Mammary epithelial cell (primary cell): ENCODE measurements at regions of chr20 and their contacts with region 1.

Region 1: DNA sequence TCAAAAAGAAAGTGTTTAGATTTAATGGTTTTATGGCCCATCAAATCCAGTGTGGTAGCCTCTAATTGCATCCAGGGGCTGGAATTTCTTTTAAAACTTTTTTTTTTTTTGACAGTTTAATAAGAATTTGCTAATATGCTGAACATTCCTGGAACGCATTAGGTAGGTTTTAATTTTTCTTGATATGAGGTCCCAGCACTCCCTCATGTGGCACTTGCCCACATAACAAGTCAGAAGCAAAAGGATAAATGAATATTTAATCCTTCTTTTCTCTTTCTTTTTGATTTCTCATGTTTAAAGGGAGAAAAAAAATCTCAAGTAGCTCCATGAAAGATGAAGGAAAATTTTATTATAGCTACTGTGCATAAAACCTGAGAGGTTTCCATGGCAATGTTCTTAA is 13.5 kb downstream of the HAO1 start:
- DNase-seq: no peak
- H3K4me3 ChIP-seq: no peak overlapping the region
- H3K27ac ChIP-seq: no peak overlapping the region
- H3K4me1 ChIP-seq: peaks cover 23% of the 10 kb centered on the region
- H3K27me3 ChIP-seq: no peaks in the 10 kb centered on the region
- CTCF ChIP-seq: peak; percentile 67 to 75

Region 2: GRCh38 chr20:6828794-6829423 is 1097.9 kb before region 1 on chr20:
- CTCF ChIA-PET with region 1: no interaction called
- dilution Hi-C with region 1: no loop called
- in situ Hi-C with region 1: no loop called
- intact Hi-C with region 1: loop called (anchors 2 kb)
- DNase-seq: peak; percentile 68
- H3K4me3 ChIP-seq: no peak overlapping the region
- H3K27ac ChIP-seq: peak overlapping the region; percentile 39
- H3K4me1 ChIP-seq: peaks cover 11% of the 10 kb centered on the region
- H3K27me3 ChIP-seq: no peaks in the 10 kb centered on the region
- CTCF ChIP-seq: peak; percentile 73 to 76

Region 3: DNA sequence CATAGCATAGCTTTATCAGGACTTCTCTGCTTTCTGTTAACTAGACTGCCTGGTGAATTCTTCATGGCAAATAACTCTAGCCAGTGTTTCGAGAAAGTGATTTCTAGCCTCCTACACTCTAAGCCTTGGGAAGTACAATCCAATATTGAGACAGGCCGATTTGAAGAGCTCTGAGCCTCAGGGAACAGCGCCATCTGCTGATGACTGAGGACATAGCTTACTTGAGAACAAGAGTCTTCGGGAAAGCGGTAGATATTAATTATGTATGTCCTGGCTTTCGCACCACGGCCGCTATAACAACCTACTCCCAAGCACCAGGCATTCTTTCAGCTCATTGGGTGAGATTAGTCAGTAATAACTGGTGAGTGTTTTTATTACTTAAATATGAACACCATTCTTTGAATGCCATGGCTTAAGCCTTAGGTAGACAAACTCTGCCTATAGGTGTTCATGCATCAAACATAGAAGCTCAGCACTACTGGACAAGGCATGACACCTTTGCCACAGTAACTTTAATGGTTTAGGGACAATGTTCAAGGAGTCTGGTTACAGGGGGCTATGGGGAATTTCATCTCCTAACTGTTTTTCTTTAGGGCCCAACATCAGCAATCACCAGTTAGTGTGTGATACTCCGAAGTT is 640.7 kb before region 1 on chr20:
- CTCF ChIA-PET with region 1: no interaction called
- dilution Hi-C with region 1: no loop called
- in situ Hi-C with region 1: no loop called
- intact Hi-C with region 1: loop called (anchors 5 kb)
- DNase-seq: peak; percentile 71
- H3K4me3 ChIP-seq: no peak overlapping the region
- H3K27ac ChIP-seq: no peak overlapping the region
- H3K4me1 ChIP-seq: no peaks in the 10 kb centered on the region
- H3K27me3 ChIP-seq: no peaks in the 10 kb centered on the region
- CTCF ChIP-seq: peak; percentile 92 to 93

Region 4: GRCh38 chr20:7497985-7498384 is 428.8 kb before region 1 on chr20:
- CTCF ChIA-PET with region 1: no interaction called
- dilution Hi-C with region 1: no loop called
- in situ Hi-C with region 1: no loop called
- intact Hi-C with region 1: loop called (anchors 5 kb)
- DNase-seq: peak; percentile 92
- H3K4me3 ChIP-seq: no peak overlapping the region
- H3K27ac ChIP-seq: peak overlapping the region; percentile 78
- H3K4me1 ChIP-seq: peaks cover 28% of the 10 kb centered on the region
- H3K27me3 ChIP-seq: no peaks in the 10 kb centered on the region
- CTCF ChIP-seq: no peak

Region 5: GRCh38 chr20:8094415-8094818 is 167.7 kb after region 1 on chr20:
- CTCF ChIA-PET with region 1: no interaction called
- dilution Hi-C with region 1: no loop called
- in situ Hi-C with region 1: no loop called
- intact Hi-C with region 1: no loop called
- DNase-seq: no peak
- H3K4me3 ChIP-seq: no peak overlapping the region
- H3K27ac ChIP-seq: no peak overlapping the region
- H3K4me1 ChIP-seq: no peaks in the 10 kb centered on the region
- H3K27me3 ChIP-seq: no peaks in the 10 kb centered on the region
- CTCF ChIP-seq: no peak

Region 6: DNA sequence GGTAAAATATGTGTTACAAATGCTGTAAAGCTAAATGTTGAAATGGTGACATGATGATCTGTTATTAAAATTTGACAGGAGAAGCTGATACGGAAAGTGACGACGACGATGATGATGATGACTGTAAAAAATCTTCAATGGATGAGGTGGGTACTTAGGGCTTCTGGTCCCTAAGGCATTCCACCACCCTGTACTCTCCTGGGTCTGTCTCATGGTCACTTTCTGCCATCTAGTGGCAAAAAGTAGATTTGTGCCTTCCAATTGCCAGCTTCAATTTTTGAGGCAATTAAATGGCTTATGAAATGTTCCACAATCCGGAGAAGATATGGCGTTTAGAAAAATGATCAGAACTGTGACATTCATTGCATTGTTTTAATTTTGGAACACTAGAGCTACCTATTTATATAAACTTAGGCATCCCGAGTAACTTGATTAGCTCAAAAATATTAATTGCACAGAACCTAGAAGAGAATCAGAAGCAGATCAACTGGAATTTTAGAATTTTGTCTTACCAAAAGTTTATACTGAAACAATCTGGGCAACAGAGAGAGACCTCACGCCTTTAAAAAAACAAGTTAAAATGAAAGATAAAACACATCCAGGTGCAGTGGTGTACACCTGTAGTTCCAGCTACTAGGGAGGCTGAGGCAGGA is 795.6 kb after region 1 on chr20:
- CTCF ChIA-PET with region 1: no interaction called
- dilution Hi-C with region 1: no loop called
- in situ Hi-C with region 1: loop called in 1 of 2 experiments (anchors 25 kb)
- intact Hi-C with region 1: no loop called
- DNase-seq: peak; percentile 42
- H3K4me3 ChIP-seq: no peak overlapping the region
- H3K27ac ChIP-seq: no peak overlapping the region
- H3K4me1 ChIP-seq: no peaks in the 10 kb centered on the region
- H3K27me3 ChIP-seq: no peaks in the 10 kb centered on the region
- CTCF ChIP-seq: peak; percentile 78 to 84